ENCODE measurements at regions of chr3 and their contacts with region 1.

Region 1: GRCh38 chr3:119240591-119241434 is at the start of gene B4GALT4:
- DNase-seq: peak; percentile 79
- H3K4me3 Mint-ChIP-seq: peak within 1 kb of the TSS; percentile 79
- H3K27ac Mint-ChIP-seq: peak within 1 kb of the TSS; percentile 78
- H3K4me1 Mint-ChIP-seq: peaks cover 40% of the 10 kb centered on the region
- H3K27me3 Mint-ChIP-seq: no peaks in the 10 kb centered on the region
- total RNA-seq, gene B4GALT4: 10.9 to 11.6 TPM

Region 2: GRCh38 chr3:119034256-119035013 is 206.4 kb before region 1 on chr3 and contains the start of gene IGSF11:
- CTCF ChIA-PET with region 1: interaction called, 22 read pairs
- POLR2A ChIA-PET with region 1: no interaction called
- DNase-seq: peak; percentile 53
- H3K4me3 Mint-ChIP-seq: peak within 1 kb of the TSS; percentile 73
- H3K27ac Mint-ChIP-seq: no peak within 1 kb of the TSS
- H3K4me1 Mint-ChIP-seq: peaks cover 11% of the 10 kb centered on the region
- H3K27me3 Mint-ChIP-seq: peaks cover 50% of the 10 kb centered on the region
- total RNA-seq, gene IGSF11: 0.38 TPM in 1 of 2 experiments, not detected in the other

Region 3: DNA sequence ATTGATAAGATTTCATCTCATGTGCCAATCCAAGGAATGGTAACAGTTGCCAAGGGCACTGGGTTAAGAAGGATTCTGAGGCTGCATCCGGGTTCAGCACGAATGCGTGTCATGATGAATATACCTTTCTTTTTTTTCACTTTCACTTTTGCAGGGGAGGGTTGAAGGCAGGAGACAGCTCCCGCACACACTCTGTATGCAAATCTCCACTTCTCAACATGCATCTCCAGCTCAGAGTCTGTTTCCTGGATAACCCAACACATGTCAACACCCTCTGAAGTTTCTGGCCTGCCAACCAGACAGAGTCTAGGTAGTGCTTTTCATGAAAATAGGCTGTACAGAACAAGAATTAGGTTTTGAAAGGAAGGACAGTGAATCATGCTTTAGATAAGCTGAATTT is 21.7 kb before region 1 on chr3:
- CTCF ChIA-PET with region 1: interaction called, 19 read pairs
- POLR2A ChIA-PET with region 1: interaction called, 11 read pairs
- DNase-seq: peak; percentile 44
- H3K4me3 Mint-ChIP-seq: peak overlapping the region; percentile 4
- H3K27ac Mint-ChIP-seq: peak overlapping the region; percentile 48
- H3K4me1 Mint-ChIP-seq: peaks cover 16% of the 10 kb centered on the region
- H3K27me3 Mint-ChIP-seq: no peaks in the 10 kb centered on the region

Region 4: GRCh38 chr3:119279101-119279554 is 38.3 kb after region 1 on chr3:
- CTCF ChIA-PET with region 1: interaction called, 10 read pairs
- POLR2A ChIA-PET with region 1: no interaction called
- DNase-seq: no peak
- H3K4me3 Mint-ChIP-seq: no peak overlapping the region
- H3K27ac Mint-ChIP-seq: no peak overlapping the region
- H3K4me1 Mint-ChIP-seq: no peaks in the 10 kb centered on the region
- H3K27me3 Mint-ChIP-seq: peaks cover 5% of the 10 kb centered on the region

Region 5: GRCh38 chr3:119463171-119464169 is 222.7 kb after region 1 on chr3 and contains the start of gene TMEM39A:
- CTCF ChIA-PET with region 1: interaction called, 3 read pairs
- POLR2A ChIA-PET with region 1: interaction called, 10 read pairs
- DNase-seq: peak; percentile 99
- H3K4me3 Mint-ChIP-seq: peak within 1 kb of the TSS; percentile 97
- H3K27ac Mint-ChIP-seq: peak within 1 kb of the TSS; percentile 96
- H3K4me1 Mint-ChIP-seq: peaks cover 54% of the 10 kb centered on the region
- H3K27me3 Mint-ChIP-seq: no peaks in the 10 kb centered on the region
- total RNA-seq, gene TMEM39A: 42.7 to 42.8 TPM

Region 6: DNA sequence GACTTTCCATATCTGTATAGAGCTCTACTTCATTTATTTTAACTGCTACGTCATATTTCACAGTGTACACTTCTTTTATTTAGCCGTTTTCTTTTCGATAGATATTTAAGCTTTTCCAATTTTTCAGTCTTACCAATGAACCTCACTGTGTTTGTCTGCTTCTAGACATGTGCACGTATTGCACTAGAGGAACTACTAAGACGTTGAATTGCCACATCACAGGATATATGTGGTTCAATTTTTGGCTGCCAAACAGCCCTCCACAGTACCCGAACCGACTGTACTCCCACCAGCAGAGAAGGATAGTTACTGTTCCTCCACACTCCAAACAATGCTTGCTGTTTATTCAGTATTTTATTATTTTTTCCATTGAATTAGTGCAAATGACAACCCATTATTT is 543.1 kb after region 1 on chr3:
- CTCF ChIA-PET with region 1: no interaction called
- POLR2A ChIA-PET with region 1: no interaction called
- DNase-seq: no peak
- H3K4me3 Mint-ChIP-seq: no peak overlapping the region
- H3K27ac Mint-ChIP-seq: no peak overlapping the region
- H3K4me1 Mint-ChIP-seq: peaks cover 4% of the 10 kb centered on the region
- H3K27me3 Mint-ChIP-seq: no peaks in the 10 kb centered on the region

Measured in activated CD4-positive, alpha-beta memory T cell treated with anti-CD3 and anti-CD28 coated beads, Interleukin-2, amount 10 ng/mL, durations not matched to agents 7 days and 5 days (primary cell).